Prostate gland (tissue), 2 donors: ENCODE measurements at regions of chr9 and their contacts with region 1.

Region 1: GRCh38 chr9:121992571-121993212 is 100.4 kb downstream of the TTLL11 start:
- DNase-seq: peak; percentile 74
- H3K4me3 ChIP-seq: no peak overlapping the region
- H3K27ac ChIP-seq: no peak overlapping the region
- H3K4me1 ChIP-seq: no peaks in the 10 kb centered on the region
- H3K27me3 ChIP-seq: no peaks in the 10 kb centered on the region
- CTCF ChIP-seq: peak; percentile 57 to 95 (median 86)
- POLR2A ChIP-seq: no peak

Region 2: DNA sequence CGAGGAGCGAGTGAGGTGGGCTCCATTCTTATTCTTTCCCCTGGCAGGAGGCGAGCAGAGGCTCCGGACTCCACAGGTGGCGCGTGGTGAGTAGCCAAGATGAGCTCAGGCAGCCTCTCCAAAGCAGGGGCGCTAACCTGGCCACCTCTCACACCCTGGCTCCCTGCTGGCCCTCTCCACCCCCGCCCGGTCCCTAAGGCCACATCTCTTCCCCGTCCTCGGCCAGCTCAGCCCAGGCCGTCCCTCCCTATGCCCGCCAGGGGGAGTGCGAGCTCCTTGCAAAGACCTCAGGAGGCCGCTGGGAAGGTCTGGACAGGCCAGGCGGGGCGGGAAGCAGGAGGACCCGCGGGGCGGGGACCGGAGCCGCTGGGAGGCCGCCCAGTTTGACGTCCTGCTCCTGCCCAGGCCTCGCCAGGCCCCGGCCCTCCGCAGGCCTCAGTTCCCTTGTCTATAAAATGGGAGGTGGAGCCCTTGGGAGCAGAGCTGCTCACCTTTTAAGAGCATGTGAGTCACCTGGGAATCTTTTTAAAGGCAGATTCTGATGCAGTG is 446.7 kb before region 1 on chr9:
- intact Hi-C with region 1: loop called (anchors 2 kb)
- DNase-seq: peak; percentile 95
- H3K4me3 ChIP-seq: peak overlapping the region in 1 of 2 donors; percentile 13
- H3K27ac ChIP-seq: peak overlapping the region in 1 of 2 donors; percentile 48
- H3K4me1 ChIP-seq: no peaks in the 10 kb centered on the region
- H3K27me3 ChIP-seq: no peaks in the 10 kb centered on the region
- CTCF ChIP-seq: peak; percentile 79 to 98 (median 94)
- POLR2A ChIP-seq: no peak

Region 3: GRCh38 chr9:121686930-121687541 is 305.7 kb before region 1 on chr9:
- intact Hi-C with region 1: loop called (anchors 5 kb)
- DNase-seq: peak; percentile 74
- H3K4me3 ChIP-seq: no peak overlapping the region
- H3K27ac ChIP-seq: no peak overlapping the region
- H3K4me1 ChIP-seq: no peaks in the 10 kb centered on the region
- H3K27me3 ChIP-seq: no peaks in the 10 kb centered on the region
- CTCF ChIP-seq: peak; percentile 57 to 91 (median 81)
- POLR2A ChIP-seq: no peak

Region 4: GRCh38 chr9:121700163-121700831 is 292.4 kb before region 1 on chr9:
- intact Hi-C with region 1: loop called (anchors 5 kb)
- DNase-seq: peak; percentile 93
- H3K4me3 ChIP-seq: peak overlapping the region; percentile 46 to 49
- H3K27ac ChIP-seq: peak overlapping the region; percentile 80 to 85
- H3K4me1 ChIP-seq: peaks cover 8% of the 10 kb centered on the region
- H3K27me3 ChIP-seq: no peaks in the 10 kb centered on the region
- CTCF ChIP-seq: peak; percentile 31 to 83 (median 72)
- POLR2A ChIP-seq: peak; percentile 7

Region 5: DNA sequence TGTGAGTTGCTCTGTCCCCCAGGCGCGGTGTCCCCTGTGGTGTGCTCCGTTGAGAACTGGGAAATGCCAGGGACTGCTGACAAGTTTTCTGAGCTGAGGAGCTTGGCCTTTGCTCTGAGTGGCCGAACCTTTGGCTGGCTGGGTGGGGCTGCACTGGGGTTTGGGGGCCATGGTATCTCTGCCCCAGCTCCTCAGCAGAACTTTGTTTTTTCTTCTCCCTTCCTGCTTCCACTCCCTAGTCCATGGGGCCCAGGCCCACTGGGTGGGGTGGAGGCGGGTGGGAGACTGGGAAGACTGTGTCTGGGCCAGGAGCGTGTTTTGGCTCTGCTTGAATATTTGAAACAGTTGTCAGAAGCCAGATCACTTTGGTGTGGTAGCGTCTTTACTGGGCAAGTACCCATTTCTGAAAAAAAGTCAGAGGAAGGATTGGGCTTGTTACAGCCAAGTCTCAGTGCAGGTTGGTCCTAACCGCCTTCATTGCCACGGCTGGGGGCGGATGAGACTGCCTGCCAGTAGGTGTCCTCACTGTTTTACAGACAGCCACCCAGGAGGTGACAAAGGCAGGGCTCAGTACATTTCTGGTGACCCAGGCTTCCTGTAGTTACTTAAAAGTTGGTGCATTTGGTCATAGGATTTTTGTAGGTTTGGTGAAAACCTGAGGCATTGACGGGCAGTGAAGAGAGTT is 248.5 kb before region 1 on chr9:
- intact Hi-C with region 1: loop called (anchors 5 kb)
- DNase-seq: peak; percentile 81
- H3K4me3 ChIP-seq: peak overlapping the region; percentile 18 to 20
- H3K27ac ChIP-seq: peak overlapping the region; percentile 80 to 83
- H3K4me1 ChIP-seq: peaks cover 16% of the 10 kb centered on the region
- H3K27me3 ChIP-seq: no peaks in the 10 kb centered on the region
- CTCF ChIP-seq: peak; percentile 20 to 75 (median 66)
- POLR2A ChIP-seq: no peak

Region 6: GRCh38 chr9:121972501-121972981 is 20.2 kb before region 1 on chr9:
- intact Hi-C with region 1: no loop called
- DNase-seq: peak; percentile 65
- H3K4me3 ChIP-seq: no peak overlapping the region
- H3K27ac ChIP-seq: no peak overlapping the region
- H3K4me1 ChIP-seq: no peaks in the 10 kb centered on the region
- H3K27me3 ChIP-seq: no peaks in the 10 kb centered on the region
- CTCF ChIP-seq: no peak
- POLR2A ChIP-seq: no peak